Stomach (tissue), 19 donors: ENCODE measurements at regions of chr1 and their contacts with region 1.

Region 1: DNA sequence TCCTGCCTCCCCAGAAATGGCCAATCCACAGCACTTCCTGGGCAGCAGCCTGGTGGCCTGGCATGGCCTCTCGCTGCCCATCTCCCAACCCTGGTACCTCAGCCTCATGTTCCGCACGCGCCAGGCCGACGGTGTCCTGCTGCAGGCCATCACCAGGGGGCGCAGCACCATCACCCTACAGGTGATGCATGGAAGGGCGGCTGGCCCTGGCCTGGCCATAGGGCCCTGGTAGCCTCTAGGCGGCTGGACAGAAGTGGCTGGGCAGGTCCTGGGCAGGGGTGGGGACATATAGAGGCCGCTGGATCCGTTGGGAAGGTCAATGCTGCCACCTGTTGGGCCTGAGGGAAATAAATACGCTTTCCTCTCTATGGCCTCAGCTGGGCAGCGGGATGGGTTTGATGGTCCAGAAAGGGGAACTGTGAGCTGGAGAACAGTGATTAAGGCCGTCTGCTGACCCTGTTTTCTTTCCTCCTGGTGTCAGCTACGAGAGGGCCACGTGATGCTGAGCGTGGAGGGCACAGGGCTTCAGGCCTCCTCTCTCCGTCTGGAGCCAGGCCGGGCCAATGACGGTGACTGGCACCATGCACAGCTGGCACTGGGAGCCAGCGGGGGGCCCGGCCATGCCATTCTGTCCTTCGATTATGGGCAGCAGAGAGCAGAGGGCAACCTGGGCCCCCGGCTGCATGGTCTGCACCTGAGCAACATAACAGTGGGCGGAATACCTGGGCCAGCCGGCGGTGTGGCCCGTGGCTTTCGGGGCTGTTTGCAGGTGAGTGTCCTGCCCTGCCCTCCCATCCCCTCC is 14.5 kb downstream of the CELSR2 start:
- DNase-seq: peak; percentile 93 to 96
- H3K4me3 ChIP-seq: no peak overlapping the region
- H3K27ac ChIP-seq: peak overlapping the region in 1 of 5 donors; percentile 3
- H3K4me1 ChIP-seq: peaks cover 0 to 14% (median 6%) of the 10 kb centered on the region in 4 donors
- H3K27me3 ChIP-seq: no peaks in the 10 kb centered on the region
- CTCF ChIP-seq: peak; percentile 94 to 100 (median 97)
- EP300 ChIP-seq: no peak
- POLR2A ChIP-seq: no peak

Region 2: GRCh38 chr1:108703939-108704900 is 559.6 kb before region 1 on chr1:
- intact Hi-C with region 1: no loop called
- DNase-seq: no peak
- H3K4me3 ChIP-seq: no peak overlapping the region
- H3K27ac ChIP-seq: no peak overlapping the region
- H3K4me1 ChIP-seq: peaks cover 0 to 16% (median 9%) of the 10 kb centered on the region in 4 donors
- H3K27me3 ChIP-seq: peaks cover 0 to 2% (median 0%) of the 10 kb centered on the region in 3 donors
- CTCF ChIP-seq: no peak
- EP300 ChIP-seq: no peak
- POLR2A ChIP-seq: no peak

Region 3: GRCh38 chr1:109404838-109405237 is 141.0 kb after region 1 on chr1:
- intact Hi-C with region 1: loop called (anchors 5 kb)
- DNase-seq: no peak
- H3K4me3 ChIP-seq: no peak overlapping the region
- H3K27ac ChIP-seq: no peak overlapping the region
- H3K4me1 ChIP-seq: peaks cover 0 to 4% (median 0%) of the 10 kb centered on the region in 4 donors
- H3K27me3 ChIP-seq: no peaks in the 10 kb centered on the region
- CTCF ChIP-seq: no peak
- EP300 ChIP-seq: no peak
- POLR2A ChIP-seq: no peak

Region 4: GRCh38 chr1:109454497-109455133 is 190.8 kb after region 1 on chr1:
- intact Hi-C with region 1: no loop called
- DNase-seq: no peak
- H3K4me3 ChIP-seq: no peak overlapping the region
- H3K27ac ChIP-seq: no peak overlapping the region
- H3K4me1 ChIP-seq: no peaks in the 10 kb centered on the region
- H3K27me3 ChIP-seq: peaks cover 0 to 13% (median 0%) of the 10 kb centered on the region in 3 donors
- CTCF ChIP-seq: no peak
- EP300 ChIP-seq: no peak
- POLR2A ChIP-seq: no peak